GM12878 (cell line): ENCODE measurements at regions of chr10 and their contacts with region 1.

Region 1: GRCh38 chr10:34994565-34995142 is 95.5 kb downstream of the CUL2 start:
- DNase-seq: peak; percentile 38
- ATAC-seq: peak; percentile 92
- H3K4me3 ChIP-seq: no peak overlapping the region
- H3K27ac ChIP-seq: no peak overlapping the region
- H3K4me1 ChIP-seq: peaks cover 4% of the 10 kb centered on the region; the same call in 1 of the 2 replicates
- H3K27me3 ChIP-seq: no peaks in the 10 kb centered on the region
- CTCF ChIP-seq: peak; percentile 62 to 72 (median 69)
- EP300 ChIP-seq: peak in 1 of 2 experiments; percentile 44; a peak in 1 of 4 replicates
- POLR2A ChIP-seq: no peak
- RAD21 ChIP-seq: peak; percentile 66

Region 2: DNA sequence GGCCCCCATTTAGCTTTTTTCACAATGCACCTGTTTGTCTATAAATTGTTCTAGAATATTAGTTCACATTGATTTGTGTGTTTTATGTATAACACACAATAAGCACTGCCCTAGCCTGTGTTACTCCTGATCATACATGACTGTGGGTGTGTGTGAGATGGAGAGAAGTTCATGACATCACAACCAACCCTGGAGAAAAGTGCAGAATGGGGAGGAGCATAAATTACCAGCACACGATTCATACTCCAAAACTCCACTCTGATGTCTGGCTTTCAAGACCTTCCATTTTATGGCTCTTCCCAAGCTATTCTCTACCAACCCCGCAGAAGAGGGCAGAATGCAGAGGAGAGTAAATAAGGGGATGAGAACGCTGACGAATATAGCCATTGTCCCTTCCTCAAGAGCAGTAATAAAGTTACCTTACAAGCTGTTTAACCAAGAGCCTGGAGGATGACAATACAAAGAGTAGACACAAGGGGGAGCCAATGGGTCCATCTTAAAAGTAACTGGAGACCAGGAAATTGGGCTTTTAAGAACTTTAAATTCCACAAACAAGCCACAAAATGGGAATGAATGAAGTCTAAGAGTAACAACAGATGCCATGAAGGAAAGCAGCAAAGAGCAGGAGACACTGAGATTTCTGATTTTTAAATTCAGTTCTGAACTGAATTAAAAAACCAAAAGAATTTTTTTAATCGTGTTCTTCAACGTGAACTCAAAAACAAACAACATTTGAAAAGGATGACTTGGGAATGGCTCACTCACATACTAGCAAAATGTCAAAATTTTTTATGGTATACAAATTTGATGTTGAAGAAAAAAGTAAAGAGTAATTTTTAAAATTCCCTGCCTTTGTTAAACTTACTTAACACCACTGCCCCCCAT is 339.1 kb before region 1 on chr10:
- CTCF ChIA-PET with region 1: interaction called, 7 read pairs
- POLR2A ChIA-PET with region 1: interaction called, 4 read pairs
- RAD21 ChIA-PET with region 1: no interaction called
- SMC1A ChIA-PET with region 1: interaction called, 21 read pairs
- in situ Hi-C with region 1: no loop called
- intact Hi-C with region 1: no loop called
- DNase-seq: no peak
- ATAC-seq: peak; percentile 71
- H3K4me3 ChIP-seq: no peak overlapping the region
- H3K27ac ChIP-seq: no peak overlapping the region
- H3K4me1 ChIP-seq: no peaks in the 10 kb centered on the region
- H3K27me3 ChIP-seq: no peaks in the 10 kb centered on the region
- CTCF ChIP-seq: peak; percentile 57 to 70 (median 66)
- EP300 ChIP-seq: no peak
- POLR2A ChIP-seq: no peak
- RAD21 ChIP-seq: peak; percentile 56

Region 3: DNA sequence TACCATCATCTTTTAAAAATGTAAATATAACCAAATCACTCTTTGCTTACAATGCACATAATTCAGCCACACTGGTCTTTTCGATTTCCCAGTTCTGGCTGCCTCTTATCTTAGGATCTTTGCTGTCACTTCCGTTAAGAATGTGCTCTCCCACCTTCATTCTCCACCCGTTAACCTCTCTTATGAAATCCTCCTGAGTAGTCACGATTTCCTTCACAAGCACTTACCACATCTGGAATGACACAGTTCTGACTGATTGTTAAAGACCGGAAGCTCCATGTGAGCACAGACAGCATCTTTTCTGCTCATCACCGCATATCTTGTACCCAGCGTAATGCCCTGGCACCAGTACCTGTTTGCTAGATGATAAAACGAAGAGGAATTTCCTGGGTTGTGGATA is 11.2 kb after region 1 on chr10:
- CTCF ChIA-PET with region 1: interaction called, 13 read pairs
- POLR2A ChIA-PET with region 1: no interaction called
- RAD21 ChIA-PET with region 1: interaction called, 5 read pairs
- SMC1A ChIA-PET with region 1: interaction called, 8 read pairs
- in situ Hi-C with region 1: no loop called
- intact Hi-C with region 1: loop called (anchors 1 kb)
- DNase-seq: no peak
- ATAC-seq: no peak
- H3K4me3 ChIP-seq: no peak overlapping the region
- H3K27ac ChIP-seq: no peak overlapping the region
- H3K4me1 ChIP-seq: no peaks in the 10 kb centered on the region
- H3K27me3 ChIP-seq: no peaks in the 10 kb centered on the region
- CTCF ChIP-seq: no peak
- EP300 ChIP-seq: no peak
- POLR2A ChIP-seq: no peak
- RAD21 ChIP-seq: no peak

Region 4: GRCh38 chr10:35027567-35027966 is 32.9 kb after region 1 on chr10:
- CTCF ChIA-PET with region 1: interaction called, 26 read pairs
- POLR2A ChIA-PET with region 1: no interaction called
- RAD21 ChIA-PET with region 1: interaction called, 4 read pairs
- SMC1A ChIA-PET with region 1: interaction called, 7 read pairs
- in situ Hi-C with region 1: no loop called
- intact Hi-C with region 1: no loop called
- DNase-seq: no peak
- ATAC-seq: no peak
- H3K4me3 ChIP-seq: no peak overlapping the region
- H3K27ac ChIP-seq: no peak overlapping the region
- H3K4me1 ChIP-seq: no peaks in the 10 kb centered on the region
- H3K27me3 ChIP-seq: no peaks in the 10 kb centered on the region
- CTCF ChIP-seq: no peak; a peak in 2 of 6 replicates
- EP300 ChIP-seq: no peak
- POLR2A ChIP-seq: no peak
- RAD21 ChIP-seq: no peak

Region 5: DNA sequence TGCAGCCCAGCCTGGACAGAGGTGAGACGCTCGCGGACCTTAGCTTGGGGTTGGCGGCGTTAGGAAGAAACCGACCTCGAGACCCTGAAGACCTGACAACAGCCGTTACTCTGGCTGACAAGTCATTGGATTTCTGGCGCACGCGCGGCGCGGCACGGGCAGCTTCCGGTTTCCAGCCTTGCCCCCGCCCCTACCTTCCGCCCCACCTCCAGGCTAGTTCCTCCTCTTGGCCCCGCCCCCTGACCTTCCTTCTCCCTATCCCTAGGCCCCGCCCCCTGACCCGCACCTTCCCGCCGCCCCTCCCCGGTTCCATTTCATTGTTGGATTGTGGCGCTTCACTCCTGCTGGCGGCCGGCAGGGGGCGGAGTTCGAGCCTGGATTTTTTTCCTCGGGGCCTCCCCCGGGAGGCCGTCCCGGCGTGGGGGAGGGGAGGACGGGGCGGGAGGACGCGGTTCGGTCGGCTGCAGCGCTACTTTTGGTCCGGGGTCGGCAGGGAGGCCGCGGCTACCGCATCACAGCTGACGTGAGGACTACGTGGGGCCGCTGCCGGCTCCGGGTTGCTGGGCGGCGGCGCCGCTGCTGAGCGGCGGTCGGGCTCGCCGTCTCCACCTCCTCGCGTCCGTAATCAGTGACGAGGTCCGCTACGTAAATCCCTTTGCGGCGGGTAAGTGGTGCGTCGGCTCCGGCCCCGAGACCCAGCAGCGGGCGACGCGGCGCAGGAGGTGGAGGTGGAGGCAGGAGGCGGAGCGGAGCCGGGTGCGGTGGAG is 132.1 kb after region 1 on chr10 and contains the start of gene CREM:
- CTCF ChIA-PET with region 1: interaction called, 4 read pairs
- POLR2A ChIA-PET with region 1: no interaction called
- RAD21 ChIA-PET with region 1: interaction called, 28 read pairs
- SMC1A ChIA-PET with region 1: interaction called, 5 read pairs
- in situ Hi-C with region 1: no loop called
- intact Hi-C with region 1: no loop called
- DNase-seq: peak; percentile 79
- ATAC-seq: peak; percentile 78
- H3K4me3 ChIP-seq: peak within 1 kb of the TSS; percentile 81
- H3K27ac ChIP-seq: peak within 1 kb of the TSS; percentile 99
- H3K4me1 ChIP-seq: peaks cover 3% of the 10 kb centered on the region; the same call in 1 of the 2 replicates
- H3K27me3 ChIP-seq: no peaks in the 10 kb centered on the region
- CTCF ChIP-seq: peak; percentile 60 to 84 (median 81)
- EP300 ChIP-seq: peak; percentile 90 to 92; a peak in 3 of 4 replicates
- POLR2A ChIP-seq: peak; percentile 97
- RAD21 ChIP-seq: peak; percentile 91
- polyA plus RNA-seq, gene CREM: 64.2 to 70.7 TPM

Region 6: DNA sequence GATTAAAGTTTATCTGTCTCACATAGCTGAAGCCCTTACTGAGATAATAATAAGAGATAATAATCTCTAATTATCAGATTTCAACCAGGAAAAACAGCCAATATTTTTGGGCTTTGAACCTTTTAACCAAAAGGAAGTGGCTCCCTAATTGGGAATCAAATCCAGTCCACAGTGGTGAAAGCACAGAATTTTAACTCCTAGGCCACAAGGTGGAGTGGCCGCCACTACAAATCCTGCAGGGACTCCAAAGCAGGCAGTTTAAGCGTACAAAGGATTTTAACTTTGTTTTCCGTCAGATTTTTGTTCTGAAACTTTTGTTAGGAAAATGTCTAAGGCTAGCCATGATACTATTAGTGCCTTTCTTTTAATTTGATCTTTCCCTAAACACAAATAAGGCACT is 242.1 kb after region 1 on chr10:
- CTCF ChIA-PET with region 1: interaction called, 10 read pairs
- POLR2A ChIA-PET with region 1: no interaction called
- RAD21 ChIA-PET with region 1: interaction called, 6 read pairs
- SMC1A ChIA-PET with region 1: interaction called, 4 read pairs
- in situ Hi-C with region 1: no loop called
- intact Hi-C with region 1: no loop called
- DNase-seq: no peak
- ATAC-seq: no peak
- H3K4me3 ChIP-seq: no peak overlapping the region
- H3K27ac ChIP-seq: no peak overlapping the region
- H3K4me1 ChIP-seq: no peaks in the 10 kb centered on the region
- H3K27me3 ChIP-seq: no peaks in the 10 kb centered on the region
- CTCF ChIP-seq: peak in 2 of 3 experiments; percentile 15 to 28; a peak in 2 of 6 replicates
- EP300 ChIP-seq: no peak
- POLR2A ChIP-seq: no peak
- RAD21 ChIP-seq: peak; percentile 46